Activated CD4-positive, alpha-beta T cell treated with anti-CD3 and anti-CD28 coated beads for 36 hours (primary cell): ENCODE measurements at regions of chr1 and their contacts with region 1.

Region 1: DNA sequence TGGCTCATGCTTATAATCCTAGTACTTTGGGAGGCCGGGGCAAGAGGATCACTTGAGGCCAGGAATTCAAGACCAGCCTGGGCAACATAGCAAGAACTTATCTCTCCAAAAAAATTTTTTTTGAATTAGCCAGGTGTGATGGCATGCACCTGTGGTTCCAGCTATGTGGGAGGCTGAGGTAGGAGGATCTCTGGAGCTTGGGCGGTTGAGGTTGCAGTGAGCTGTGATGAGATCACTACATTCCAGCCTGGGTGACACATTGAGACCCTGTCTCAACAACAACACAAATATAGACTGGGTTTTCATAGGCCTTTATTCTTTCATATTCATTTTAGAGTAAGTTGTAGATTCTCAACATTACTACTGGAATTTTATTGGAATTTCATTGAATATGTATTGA is 12.8 kb downstream of the MED18 start:
- DNase-seq: no peak
- ATAC-seq: no peak
- H3K4me3 Mint-ChIP-seq: no peak overlapping the region
- H3K27ac Mint-ChIP-seq: no peak overlapping the region
- H3K4me1 Mint-ChIP-seq: peaks cover 7% of the 10 kb centered on the region
- H3K27me3 Mint-ChIP-seq: no peaks in the 10 kb centered on the region

Region 2: DNA sequence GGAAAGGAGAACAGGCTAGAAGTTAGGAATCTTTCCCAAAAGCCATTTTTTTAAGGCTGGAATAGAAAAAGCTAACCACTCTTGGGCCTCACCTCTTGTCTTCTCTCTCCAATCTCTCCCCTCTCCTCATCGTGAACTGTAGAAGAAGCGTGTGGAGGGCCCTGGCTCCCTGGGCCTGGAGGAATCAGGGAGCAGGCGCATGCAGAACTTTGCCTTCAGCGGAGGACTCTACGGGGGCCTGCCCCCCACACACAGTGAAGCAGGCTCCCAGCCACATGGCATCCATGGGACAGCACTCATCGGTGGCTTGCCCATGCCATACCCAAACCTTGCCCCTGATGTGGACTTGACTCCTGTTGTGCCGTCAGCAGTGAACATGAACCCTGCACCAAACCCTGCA is 491.6 kb before region 1 on chr1:
- CTCF ChIA-PET with region 1: no interaction called
- POLR2A ChIA-PET with region 1: no interaction called
- intact Hi-C with region 1: no loop called
- DNase-seq: no peak
- ATAC-seq: no peak
- H3K4me3 Mint-ChIP-seq: no peak overlapping the region
- H3K27ac Mint-ChIP-seq: no peak overlapping the region
- H3K4me1 Mint-ChIP-seq: no peaks in the 10 kb centered on the region
- H3K27me3 Mint-ChIP-seq: no peaks in the 10 kb centered on the region

Region 3: GRCh38 chr1:28359592-28360239 is 18.1 kb after region 1 on chr1:
- CTCF ChIA-PET with region 1: interaction called, 13 read pairs
- POLR2A ChIA-PET with region 1: no interaction called
- intact Hi-C with region 1: no loop called
- DNase-seq: peak; percentile 88
- ATAC-seq: peak; percentile 78
- H3K4me3 Mint-ChIP-seq: no peak overlapping the region
- H3K27ac Mint-ChIP-seq: no peak overlapping the region
- H3K4me1 Mint-ChIP-seq: no peaks in the 10 kb centered on the region
- H3K27me3 Mint-ChIP-seq: no peaks in the 10 kb centered on the region